Activated B cell treated with CpG ODN at 0.5 μM for 24 hours (primary cell): ENCODE measurements at regions of chr2 and their contacts with region 1.

Region 1: DNA sequence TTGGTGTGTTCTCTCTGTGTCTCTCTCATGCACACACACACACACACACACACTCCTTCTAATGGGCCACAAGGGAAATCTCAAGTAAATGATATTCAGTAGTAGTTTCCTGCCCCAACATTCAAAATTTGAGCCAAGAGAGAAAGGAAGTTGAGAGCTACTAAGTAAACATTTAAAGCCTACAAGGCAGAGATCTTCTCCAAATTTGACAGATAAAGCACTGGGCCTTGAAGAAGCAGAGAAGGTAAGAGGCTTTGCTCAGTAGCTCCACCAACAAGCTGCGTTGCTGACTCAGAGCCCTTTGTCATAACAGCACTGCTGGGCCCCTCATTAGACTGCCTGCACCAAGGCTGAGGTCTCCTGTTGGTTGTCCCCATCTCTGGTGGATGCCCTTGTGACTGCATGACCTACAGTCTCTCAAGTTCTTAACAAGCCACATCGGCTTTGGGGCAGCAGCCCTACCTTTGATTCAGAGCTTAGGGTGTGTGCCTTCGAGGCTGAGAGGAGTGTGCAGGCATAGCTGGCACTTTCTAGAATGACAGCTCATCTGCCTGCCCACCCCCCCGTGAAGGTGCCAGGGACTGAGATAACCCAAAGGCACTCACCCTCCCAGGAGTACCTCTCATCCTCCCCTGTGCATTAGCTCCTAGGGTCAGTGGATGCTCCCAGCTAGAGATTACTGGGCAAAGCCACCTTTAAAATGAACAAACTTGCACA is 32.3 kb upstream of the NEB start:
- DNase-seq: peak; percentile 47
- ATAC-seq: peak; percentile 71
- H3K4me3 Mint-ChIP-seq: peak overlapping the region; percentile 56
- H3K27ac Mint-ChIP-seq: peak overlapping the region; percentile 95
- H3K4me1 Mint-ChIP-seq: peaks cover 90% of the 10 kb centered on the region
- H3K27me3 Mint-ChIP-seq: no peaks in the 10 kb centered on the region
- CTCF ChIP-seq: no peak

Region 2: GRCh38 chr2:151679994-151680393 is 86.6 kb before region 1 on chr2:
- CTCF ChIA-PET with region 1: no interaction called
- POLR2A ChIA-PET with region 1: no interaction called
- intact Hi-C with region 1: loop called (anchors 5 kb)
- DNase-seq: no peak
- ATAC-seq: no peak
- H3K4me3 Mint-ChIP-seq: no peak overlapping the region
- H3K27ac Mint-ChIP-seq: no peak overlapping the region
- H3K4me1 Mint-ChIP-seq: peaks cover 17% of the 10 kb centered on the region
- H3K27me3 Mint-ChIP-seq: no peaks in the 10 kb centered on the region
- CTCF ChIP-seq: no peak

Region 3: DNA sequence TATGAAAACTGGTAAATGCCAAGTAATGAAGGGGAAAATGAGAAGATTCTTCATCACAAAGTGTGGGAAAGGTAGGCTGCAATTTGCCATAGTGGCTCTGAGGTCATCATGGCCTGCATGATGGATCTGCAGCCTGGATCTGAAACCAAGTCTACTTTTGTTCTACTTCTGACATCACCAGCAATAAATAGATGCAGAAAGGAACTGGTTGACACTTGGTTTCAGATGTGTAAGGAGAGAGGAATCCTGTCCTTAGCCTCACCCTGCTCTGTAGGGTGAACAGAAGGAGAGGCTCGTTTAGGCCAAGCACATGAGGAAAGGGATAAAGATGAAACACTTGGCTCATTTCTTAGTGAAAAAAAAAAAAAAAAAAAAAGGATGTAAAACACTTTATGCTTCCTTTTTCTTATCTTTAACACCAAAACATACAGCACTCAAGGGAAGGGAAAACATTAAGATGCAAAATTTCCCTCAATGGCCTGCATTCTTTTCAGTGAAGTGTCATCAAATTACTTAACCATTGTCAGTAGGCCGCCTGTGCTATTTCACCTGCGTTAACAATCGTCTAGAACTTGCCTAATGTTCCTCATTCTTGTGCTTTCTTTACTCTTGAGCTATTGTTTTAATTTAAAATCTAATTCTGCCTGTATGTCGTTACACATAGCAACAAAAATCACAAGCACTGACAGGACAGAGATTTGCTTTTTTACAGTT is 36.2 kb before region 1 on chr2:
- CTCF ChIA-PET with region 1: interaction called, 3 read pairs
- POLR2A ChIA-PET with region 1: interaction called, 15 read pairs
- intact Hi-C with region 1: loop called (anchors 2 kb)
- DNase-seq: no peak
- ATAC-seq: peak; percentile 38
- H3K4me3 Mint-ChIP-seq: peak overlapping the region; percentile 39
- H3K27ac Mint-ChIP-seq: peak overlapping the region; percentile 67
- H3K4me1 Mint-ChIP-seq: peaks cover 36% of the 10 kb centered on the region
- H3K27me3 Mint-ChIP-seq: no peaks in the 10 kb centered on the region
- CTCF ChIP-seq: no peak

Region 4: GRCh38 chr2:151786483-151786882 is 19.9 kb after region 1 on chr2:
- CTCF ChIA-PET with region 1: interaction called, 4 read pairs
- POLR2A ChIA-PET with region 1: interaction called, 19 read pairs
- intact Hi-C with region 1: loop called (anchors 2 kb)
- DNase-seq: no peak
- ATAC-seq: peak; percentile 25
- H3K4me3 Mint-ChIP-seq: no peak overlapping the region
- H3K27ac Mint-ChIP-seq: no peak overlapping the region
- H3K4me1 Mint-ChIP-seq: peaks cover 28% of the 10 kb centered on the region
- H3K27me3 Mint-ChIP-seq: no peaks in the 10 kb centered on the region
- CTCF ChIP-seq: no peak

Region 5: GRCh38 chr2:151808258-151809072 is 41.9 kb after region 1 on chr2:
- CTCF ChIA-PET with region 1: interaction called, 3 read pairs
- POLR2A ChIA-PET with region 1: interaction called, 7 read pairs
- intact Hi-C with region 1: loop called (anchors 1 kb)
- DNase-seq: no peak
- ATAC-seq: peak; percentile 60
- H3K4me3 Mint-ChIP-seq: no peak overlapping the region
- H3K27ac Mint-ChIP-seq: no peak overlapping the region
- H3K4me1 Mint-ChIP-seq: peaks cover 4% of the 10 kb centered on the region
- H3K27me3 Mint-ChIP-seq: no peaks in the 10 kb centered on the region
- CTCF ChIP-seq: peak; percentile 20

Region 6: DNA sequence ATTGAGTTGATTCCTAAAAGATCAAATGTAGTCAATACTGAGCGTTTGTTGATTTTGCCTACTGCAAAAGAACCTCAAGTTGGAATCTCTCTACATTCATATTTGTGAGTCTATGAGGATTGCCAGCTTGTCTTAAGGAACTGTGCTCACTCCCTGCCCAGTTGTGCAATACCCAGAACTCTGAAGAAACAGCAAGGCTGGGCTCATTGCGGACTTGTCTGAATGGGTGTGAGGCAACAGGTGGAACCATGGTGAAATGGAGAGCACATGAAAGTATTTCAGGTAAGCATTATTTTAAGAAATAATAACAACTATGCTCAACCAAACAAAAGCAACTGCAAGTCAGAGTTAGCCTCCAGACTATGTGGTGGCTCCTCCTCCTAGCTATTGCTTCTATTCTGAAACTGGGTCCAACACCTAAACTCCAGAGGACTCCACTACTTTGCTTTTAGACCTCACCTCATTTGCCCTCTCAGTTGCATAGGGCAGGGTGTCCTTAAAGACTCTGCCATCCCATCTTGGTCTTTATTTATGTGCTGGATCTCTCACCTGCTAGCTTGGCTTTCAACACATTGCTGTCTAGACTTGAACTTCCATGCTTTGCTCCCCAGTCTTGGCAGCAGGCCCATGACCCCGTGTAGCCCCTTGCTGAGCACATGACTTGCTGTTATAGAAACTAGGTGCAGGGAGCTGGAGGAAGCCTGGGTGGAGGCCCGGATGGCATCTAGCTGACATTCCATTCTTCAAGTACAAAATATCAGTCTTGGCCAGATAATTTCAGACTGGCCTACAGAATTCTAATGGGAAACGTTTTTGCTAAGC is 156.5 kb after region 1 on chr2:
- CTCF ChIA-PET with region 1: no interaction called
- POLR2A ChIA-PET with region 1: no interaction called
- intact Hi-C with region 1: no loop called
- DNase-seq: no peak
- ATAC-seq: no peak
- H3K4me3 Mint-ChIP-seq: no peak overlapping the region
- H3K27ac Mint-ChIP-seq: no peak overlapping the region
- H3K4me1 Mint-ChIP-seq: peaks cover 17% of the 10 kb centered on the region
- H3K27me3 Mint-ChIP-seq: peaks cover 7% of the 10 kb centered on the region
- CTCF ChIP-seq: no peak